Gastrocnemius medialis (tissue), 4 donors: ENCODE measurements at regions of chr17 and their contacts with region 1.

Region 1: DNA sequence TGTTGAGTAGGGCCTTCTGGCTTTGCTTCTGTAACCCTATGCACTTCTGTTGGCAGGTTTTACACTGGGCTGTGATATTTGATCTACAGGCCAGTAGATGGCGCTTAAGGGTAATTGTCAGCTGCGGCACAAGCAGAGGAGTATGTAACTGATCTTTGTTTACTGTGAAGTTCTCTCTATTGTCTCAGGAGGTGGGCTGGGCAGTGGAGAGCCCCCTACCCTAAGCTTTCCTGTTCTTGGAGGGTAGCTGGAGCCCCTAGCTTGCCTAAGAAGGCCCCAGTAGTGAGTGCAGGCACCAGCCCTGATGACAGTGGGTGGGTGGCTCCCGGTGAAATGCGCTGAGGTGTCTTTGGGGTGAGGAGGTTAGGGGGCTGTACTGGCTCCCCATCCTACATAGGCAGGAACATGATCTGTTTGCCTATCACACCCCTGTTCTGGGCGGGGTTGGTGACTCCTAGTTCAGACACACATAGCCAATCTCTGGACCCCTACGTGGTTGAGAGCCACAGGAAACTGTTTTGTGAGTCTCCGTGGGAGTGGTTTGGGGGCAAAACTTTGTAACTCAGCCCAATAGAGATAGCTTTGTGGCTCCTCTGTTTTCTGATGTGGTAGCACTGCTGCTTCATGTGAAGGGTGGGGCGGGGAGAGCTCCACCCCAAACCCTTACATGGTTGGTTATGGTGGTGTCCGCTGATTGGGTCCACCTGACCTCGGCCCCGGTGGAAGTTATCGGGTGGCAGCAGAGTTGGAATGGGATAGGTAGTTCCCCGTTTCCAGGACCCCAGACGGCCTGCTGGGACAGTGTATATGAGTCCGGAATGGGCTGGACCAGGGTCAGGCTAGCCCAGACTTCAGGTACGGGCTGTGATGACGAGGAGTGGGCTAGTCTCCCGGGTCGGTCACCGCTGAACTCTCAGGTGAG is 60.4 kb downstream of the SLFN11 start:
- DNase-seq: peak; percentile 53 to 58
- ATAC-seq: peak; percentile 64 to 86
- H3K4me3 ChIP-seq: peak overlapping the region; percentile 52 to 69 (median 56)
- H3K27ac ChIP-seq: peak overlapping the region; percentile 79 to 88 (median 85)
- H3K4me1 ChIP-seq: peaks cover 18 to 39% of the 10 kb centered on the region in 2 donors
- H3K27me3 ChIP-seq: no peaks in the 10 kb centered on the region
- CTCF ChIP-seq: peak; percentile 67 to 85 (median 80)
- POLR2A ChIP-seq: peak; percentile 18 to 72

Region 2: GRCh38 chr17:35284955-35285354 is 28.1 kb before region 1 on chr17:
- in situ Hi-C with region 1: no loop called
- intact Hi-C with region 1: no loop called
- DNase-seq: no peak
- ATAC-seq: no peak
- H3K4me3 ChIP-seq: no peak overlapping the region
- H3K27ac ChIP-seq: no peak overlapping the region
- H3K4me1 ChIP-seq: no peaks in the 10 kb centered on the region
- H3K27me3 ChIP-seq: peaks cover 0 to 5% (median 0%) of the 10 kb centered on the region in 3 donors
- CTCF ChIP-seq: no peak
- POLR2A ChIP-seq: no peak

Region 3: DNA sequence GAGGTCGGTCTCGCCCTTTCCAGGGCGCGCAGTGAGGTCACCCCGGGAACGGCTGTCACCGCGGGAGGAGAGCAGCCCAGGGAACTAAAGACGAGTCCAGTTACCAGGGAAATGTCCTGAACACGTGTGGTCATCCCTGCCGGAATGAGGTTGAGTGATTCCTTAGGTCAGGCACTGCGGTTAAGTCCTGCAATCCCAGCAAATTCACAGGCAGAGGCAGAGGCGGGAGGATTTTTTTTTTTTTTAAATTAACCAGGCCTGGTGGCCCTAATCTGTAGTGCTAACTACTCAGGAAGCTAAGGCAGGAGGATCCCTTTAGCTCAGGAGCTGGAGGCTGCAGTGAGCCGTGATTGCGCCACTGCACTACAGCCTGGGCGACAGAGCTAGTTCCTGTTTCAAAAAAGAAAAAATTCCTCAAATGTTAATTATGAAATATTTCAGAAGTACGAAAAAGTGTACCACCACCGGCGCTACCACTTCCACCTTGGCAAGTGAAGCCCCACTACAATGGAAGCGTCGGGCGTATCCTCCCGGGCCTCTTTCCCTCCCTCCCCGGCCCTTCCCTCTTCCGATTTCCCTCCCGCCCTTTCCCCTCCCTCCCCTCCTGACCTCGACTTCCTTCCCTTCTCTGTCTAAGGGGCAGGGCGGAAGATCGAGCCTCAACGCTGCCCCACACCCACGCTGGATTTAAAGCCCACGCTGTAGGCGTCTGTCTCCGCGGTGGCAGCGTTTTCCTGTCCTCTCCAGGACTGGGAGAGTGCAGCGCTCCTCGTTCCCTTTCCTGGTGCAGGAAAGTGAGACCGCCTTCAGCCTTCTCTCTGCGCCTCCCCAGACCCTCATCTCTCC is 33.1 kb after region 1 on chr17:
- in situ Hi-C with region 1: no loop called
- intact Hi-C with region 1: loop called (anchors 2 kb)
- DNase-seq: peak; percentile 50 to 58
- ATAC-seq: peak; percentile 84 to 86
- H3K4me3 ChIP-seq: peak overlapping the region; percentile 48 to 67 (median 51)
- H3K27ac ChIP-seq: peak overlapping the region; percentile 65 to 74 (median 70)
- H3K4me1 ChIP-seq: peaks cover 9 to 22% of the 10 kb centered on the region in 2 donors
- H3K27me3 ChIP-seq: peaks cover 11 to 26% (median 25%) of the 10 kb centered on the region in 3 donors
- CTCF ChIP-seq: peak in 1 of 5 experiments; percentile 5
- POLR2A ChIP-seq: peak in 1 of 2 donors; percentile 19

Region 4: DNA sequence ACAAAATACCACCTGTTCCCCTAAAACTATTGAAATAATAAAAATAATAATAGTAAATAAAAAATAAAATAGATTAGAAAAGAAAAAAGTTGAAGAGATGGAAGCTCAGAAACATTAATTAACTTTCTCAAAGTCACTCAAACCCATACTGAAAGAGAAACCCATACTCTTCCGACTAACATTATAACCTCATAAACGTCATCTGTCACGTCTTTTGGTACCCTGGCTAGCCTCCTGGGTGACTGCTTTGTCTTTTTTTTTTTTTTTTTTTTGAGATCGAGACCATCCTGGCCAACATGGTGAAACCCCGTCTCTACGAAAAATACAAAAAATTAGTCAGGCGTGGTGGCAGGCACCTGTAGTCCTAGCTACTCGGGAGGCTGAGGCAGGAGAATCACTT is 216.8 kb after region 1 on chr17:
- in situ Hi-C with region 1: loop called (anchors 5 kb)
- intact Hi-C with region 1: loop called (anchors 1 kb)
- DNase-seq: no peak
- ATAC-seq: no peak
- H3K4me3 ChIP-seq: no peak overlapping the region
- H3K27ac ChIP-seq: no peak overlapping the region
- H3K4me1 ChIP-seq: no peaks in the 10 kb centered on the region
- H3K27me3 ChIP-seq: no peaks in the 10 kb centered on the region
- CTCF ChIP-seq: no peak
- POLR2A ChIP-seq: no peak